KBM-7 (cell line): ENCODE measurements at regions of chr11 and their contacts with region 1.

Region 1: DNA sequence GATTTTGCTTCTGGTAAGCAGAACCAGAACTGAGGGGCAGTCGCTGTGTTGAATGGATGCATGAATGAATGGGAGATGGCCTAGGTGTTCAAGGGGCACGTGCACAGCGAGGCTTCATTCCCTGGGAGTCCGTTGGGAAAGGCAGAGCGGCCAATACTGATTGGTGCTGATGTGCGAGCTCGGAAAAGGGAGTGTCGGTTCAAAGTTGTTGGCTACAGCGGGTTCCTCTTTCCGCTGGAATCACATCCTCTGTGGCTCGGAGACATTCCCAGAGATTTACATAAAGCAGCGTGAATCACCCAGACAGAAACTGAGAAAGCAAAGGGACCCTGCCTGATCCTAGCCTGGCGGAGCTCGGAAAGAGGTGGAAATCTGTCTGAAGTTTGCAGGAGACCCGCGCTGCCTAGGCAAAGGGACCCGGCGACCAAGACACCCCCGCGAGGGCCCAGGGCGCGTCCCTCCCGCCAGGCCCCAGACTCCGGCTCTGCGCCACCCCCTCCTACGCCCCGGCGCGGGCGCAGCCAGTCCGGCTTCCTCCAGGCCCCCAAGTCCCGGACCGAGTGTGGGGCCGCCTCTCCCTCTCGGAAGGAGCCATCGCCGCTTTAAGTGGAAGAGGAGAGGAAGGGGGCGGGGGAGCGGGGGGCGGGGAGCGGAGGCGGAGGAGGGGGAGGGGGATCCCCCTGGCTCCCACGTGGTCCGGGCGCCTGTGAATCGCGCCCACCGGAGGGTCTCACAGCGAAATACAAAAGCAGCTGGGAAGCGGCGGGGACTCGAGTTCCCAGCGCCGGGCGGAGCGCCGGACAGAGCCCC is at the start of gene FJX1:
- DNase-seq: peak; percentile 63

Region 2: DNA sequence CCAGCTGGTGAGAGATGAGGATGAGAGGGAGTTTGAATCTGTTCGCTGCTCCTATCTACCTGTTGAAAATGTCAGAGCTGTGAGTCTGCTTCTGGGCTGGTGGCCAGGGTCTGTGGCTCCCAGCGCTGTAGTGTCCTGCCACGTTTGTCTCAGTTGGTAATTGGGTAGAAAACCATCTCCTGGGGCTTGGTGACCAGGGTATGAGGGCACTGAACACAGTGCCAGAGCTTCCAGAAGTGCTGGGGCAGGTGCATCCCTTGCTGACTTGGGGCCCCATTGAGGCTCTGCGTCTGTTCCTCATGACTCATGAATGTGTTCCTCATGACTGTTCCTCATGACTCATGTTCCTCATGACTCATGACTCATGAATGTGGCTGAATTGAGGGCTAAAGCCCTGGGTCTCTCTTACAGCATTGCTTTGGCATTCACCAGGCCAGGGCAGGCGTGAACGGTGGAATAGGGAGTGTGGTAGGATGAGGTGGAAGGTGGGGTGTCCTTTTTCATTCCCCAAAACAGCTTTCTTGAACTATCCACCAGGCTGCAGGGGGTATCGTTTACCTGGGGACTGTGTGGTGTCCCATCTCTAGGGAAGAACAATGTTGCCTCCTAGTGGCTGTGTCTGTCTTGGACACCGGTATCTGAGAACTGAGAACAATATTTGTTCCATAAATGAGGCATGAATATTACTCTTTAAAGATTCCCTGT is 531.8 kb after region 1 on chr11:
- in situ Hi-C with region 1: loop called (anchors 25 kb)
- DNase-seq: peak; percentile 68

Region 3: DNA sequence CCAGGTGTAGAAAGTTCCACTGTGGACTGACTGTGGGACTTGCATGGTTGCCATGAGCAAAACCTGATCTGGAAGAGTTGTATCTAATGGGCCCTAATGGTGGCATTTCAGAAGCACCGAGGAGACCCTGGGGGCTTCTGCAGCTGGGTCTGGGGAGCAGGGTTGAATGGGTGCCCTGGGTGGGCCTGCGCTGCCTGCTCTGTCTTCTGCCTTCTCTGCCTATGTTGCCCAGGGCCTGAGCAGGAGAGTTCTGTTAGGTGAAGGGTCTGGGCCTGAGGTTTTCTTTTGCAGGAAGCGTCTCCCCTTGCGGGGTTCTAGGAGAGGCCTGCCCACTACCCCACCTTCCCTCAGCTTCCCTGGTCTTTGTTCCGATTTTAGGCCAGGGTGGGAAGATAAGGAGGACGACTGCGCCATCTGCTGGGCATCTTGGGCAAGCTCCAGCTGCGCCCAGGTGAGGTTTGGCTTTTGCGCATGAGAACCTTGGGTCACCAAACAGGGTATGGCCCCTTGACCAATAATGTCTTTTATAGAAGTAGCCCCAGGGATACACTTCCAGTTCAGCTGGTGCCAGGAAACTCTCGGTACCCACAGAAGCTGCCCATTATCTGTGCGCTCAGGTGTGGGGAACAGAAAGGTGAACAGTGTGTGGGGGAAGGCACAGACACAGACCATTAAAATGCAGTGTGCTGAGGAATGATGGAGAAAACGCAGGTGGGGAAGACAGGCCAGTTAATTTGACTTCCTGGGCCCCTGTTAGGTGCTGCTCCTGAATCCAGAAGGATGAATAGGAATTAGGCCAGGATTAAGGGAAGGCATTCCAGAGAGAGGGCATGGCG is 648.1 kb after region 1 on chr11:
- in situ Hi-C with region 1: loop called (anchors 25 kb)
- DNase-seq: peak; percentile 69

Region 4: DNA sequence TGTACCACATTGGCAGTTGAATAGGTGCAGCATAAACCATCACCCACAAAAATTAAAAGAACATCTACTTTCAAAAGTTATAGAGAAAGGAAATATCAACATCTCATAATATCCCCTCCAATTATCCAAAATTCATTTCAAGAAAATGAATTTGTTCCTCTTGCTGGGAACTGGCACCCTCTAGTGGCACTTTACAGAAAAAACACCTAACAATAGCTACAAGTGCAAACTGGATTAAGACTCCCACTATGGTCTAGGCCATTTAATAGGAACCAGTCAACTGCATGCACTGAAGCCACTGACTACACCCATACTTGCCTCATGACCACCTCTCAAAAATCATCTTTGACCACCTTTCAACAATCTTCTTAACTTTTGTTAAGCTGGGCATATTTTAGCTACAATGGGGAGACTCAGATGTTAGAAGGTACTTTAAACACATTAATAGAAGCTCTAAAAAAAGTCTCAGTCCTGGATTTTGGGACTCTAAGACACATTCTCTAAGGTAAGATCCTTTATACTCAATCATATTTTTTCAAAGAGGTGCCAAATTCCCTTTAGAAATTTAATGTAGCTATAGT is 874.9 kb after region 1 on chr11:
- in situ Hi-C with region 1: loop called (anchors 25 kb)
- DNase-seq: peak; percentile 60